ENCODE measurements at regions of chr10 and their contacts with region 1.

Region 1: GRCh38 chr10:79038841-79039201 is 29.9 kb upstream of the ZMIZ1 start:
- DNase-seq: peak; percentile 55 to 90 (median 72)
- ATAC-seq: peak; percentile 99
- H3K4me3 ChIP-seq: no peak overlapping the region
- H3K27ac ChIP-seq: peak overlapping the region; percentile 41
- H3K4me1 ChIP-seq: peaks cover 0 to 22% of the 10 kb centered on the region in 2 experiments; a peak in 4 of 5 replicates
- H3K27me3 ChIP-seq: no peaks in the 10 kb centered on the region
- CTCF ChIP-seq: no peak
- EP300 ChIP-seq: no peak; the same call in 1 of the 2 replicates
- POLR2A ChIP-seq: peak; percentile 50
- RAD21 ChIP-seq: no peak

Region 2: DNA sequence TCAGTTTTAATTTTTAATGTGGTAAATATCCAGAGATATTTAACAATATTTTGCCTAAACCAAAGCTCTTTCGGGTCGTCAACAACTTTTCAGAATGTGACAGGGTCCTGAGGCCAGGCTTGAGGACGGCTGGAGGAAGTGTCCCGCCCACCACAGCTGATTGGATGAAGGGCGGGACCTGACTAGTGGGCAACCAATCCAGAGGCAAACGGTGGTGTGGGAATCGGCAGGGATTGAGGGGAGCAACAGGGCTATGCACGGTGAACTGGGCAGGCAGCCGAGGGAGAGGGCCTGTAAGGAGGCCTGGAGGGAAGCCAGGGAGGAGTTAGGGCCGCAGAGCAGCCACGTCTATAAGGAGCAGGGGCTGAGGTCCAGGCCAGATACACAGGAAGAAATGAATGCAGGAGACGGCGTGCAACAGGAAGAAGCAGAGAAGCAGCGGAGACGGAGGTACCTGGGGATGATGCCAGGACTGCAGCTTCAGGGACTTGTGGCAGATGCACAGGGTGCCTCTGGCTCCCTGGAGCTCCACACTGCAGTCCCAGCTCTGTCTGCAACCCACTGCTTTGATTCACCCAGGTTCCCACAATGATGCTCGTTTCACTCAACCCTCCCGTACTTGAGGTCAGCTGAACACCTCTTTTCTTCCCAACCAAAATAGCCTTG is 16.1 kb before region 1 on chr10:
- CTCF ChIA-PET with region 1: no interaction called
- POLR2A ChIA-PET with region 1: interaction called, 11 read pairs
- in situ Hi-C with region 1: no loop called
- intact Hi-C with region 1: no loop called
- DNase-seq: peak; percentile 83 to 96 (median 94)
- ATAC-seq: peak; percentile 90
- H3K4me3 ChIP-seq: no peak overlapping the region
- H3K27ac ChIP-seq: no peak overlapping the region
- H3K4me1 ChIP-seq: peaks cover 29 to 61% of the 10 kb centered on the region in 2 experiments
- H3K27me3 ChIP-seq: no peaks in the 10 kb centered on the region
- CTCF ChIP-seq: no peak
- EP300 ChIP-seq: no peak
- POLR2A ChIP-seq: no peak
- RAD21 ChIP-seq: no peak

Region 3: GRCh38 chr10:79052291-79053080 is 13.7 kb after region 1 on chr10:
- CTCF ChIA-PET with region 1: no interaction called
- POLR2A ChIA-PET with region 1: interaction called, 11 read pairs
- in situ Hi-C with region 1: no loop called
- intact Hi-C with region 1: no loop called
- DNase-seq: peak; percentile 55 to 67 (median 64)
- ATAC-seq: peak; percentile 60
- H3K4me3 ChIP-seq: no peak overlapping the region
- H3K27ac ChIP-seq: no peak overlapping the region
- H3K4me1 ChIP-seq: peaks cover 18 to 23% of the 10 kb centered on the region in 2 experiments
- H3K27me3 ChIP-seq: peaks cover 0 to 12% of the 10 kb centered on the region in 2 experiments; a peak in 3 of 5 replicates
- CTCF ChIP-seq: peak; percentile 52 to 97 (median 73)
- EP300 ChIP-seq: no peak
- POLR2A ChIP-seq: no peak
- RAD21 ChIP-seq: peak in 1 of 2 experiments; percentile 48; a peak in 2 of 4 replicates

Region 4: DNA sequence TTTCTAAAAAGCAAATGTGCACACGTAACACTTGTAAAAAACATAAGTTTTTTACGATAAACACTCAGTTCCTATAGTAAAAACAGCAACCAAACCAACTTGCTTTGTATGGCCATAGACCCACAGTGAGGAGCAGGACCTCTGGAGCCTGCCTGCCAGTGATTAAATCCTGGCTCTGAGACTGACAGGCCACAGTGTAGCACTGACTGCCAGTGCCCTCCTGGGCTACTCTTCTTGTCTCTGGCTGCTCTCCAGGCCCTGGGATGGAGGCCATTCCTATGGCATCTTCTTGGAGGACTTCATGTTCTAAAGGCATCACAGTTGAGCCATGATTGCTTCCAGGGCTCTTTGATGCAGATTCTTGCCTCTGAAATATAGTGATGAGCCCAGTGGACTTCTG is 1016.9 kb after region 1 on chr10:
- CTCF ChIA-PET with region 1: no interaction called
- POLR2A ChIA-PET with region 1: no interaction called
- in situ Hi-C with region 1: no loop called
- intact Hi-C with region 1: no loop called
- DNase-seq: no peak
- ATAC-seq: 0 out of 3 replicates have a peak, but pooled peaks have one; percentile 35
- H3K4me3 ChIP-seq: no peak overlapping the region
- H3K27ac ChIP-seq: no peak overlapping the region
- H3K4me1 ChIP-seq: no peaks in the 10 kb centered on the region
- H3K27me3 ChIP-seq: peaks cover 3 to 16% of the 10 kb centered on the region in 2 experiments; a peak in 3 of 5 replicates
- CTCF ChIP-seq: no peak
- EP300 ChIP-seq: no peak
- POLR2A ChIP-seq: no peak
- RAD21 ChIP-seq: no peak